Activated T-helper 1 cell treated with anti-CD3 and anti-CD28 coated beads, Interleukin-12 subunit alpha, Interleukin-12 subunit beta, Interleukin-2, Interleukin-4 antibody, amounts not matched to agents 30 ng/mL and 10 ng/mL and 1 ng/mL, durations not matched to agents 14 hours and 24 hours and 36 hours (primary cell): ENCODE measurements at regions of chr1 and their contacts with region 1.

Region 1: DNA sequence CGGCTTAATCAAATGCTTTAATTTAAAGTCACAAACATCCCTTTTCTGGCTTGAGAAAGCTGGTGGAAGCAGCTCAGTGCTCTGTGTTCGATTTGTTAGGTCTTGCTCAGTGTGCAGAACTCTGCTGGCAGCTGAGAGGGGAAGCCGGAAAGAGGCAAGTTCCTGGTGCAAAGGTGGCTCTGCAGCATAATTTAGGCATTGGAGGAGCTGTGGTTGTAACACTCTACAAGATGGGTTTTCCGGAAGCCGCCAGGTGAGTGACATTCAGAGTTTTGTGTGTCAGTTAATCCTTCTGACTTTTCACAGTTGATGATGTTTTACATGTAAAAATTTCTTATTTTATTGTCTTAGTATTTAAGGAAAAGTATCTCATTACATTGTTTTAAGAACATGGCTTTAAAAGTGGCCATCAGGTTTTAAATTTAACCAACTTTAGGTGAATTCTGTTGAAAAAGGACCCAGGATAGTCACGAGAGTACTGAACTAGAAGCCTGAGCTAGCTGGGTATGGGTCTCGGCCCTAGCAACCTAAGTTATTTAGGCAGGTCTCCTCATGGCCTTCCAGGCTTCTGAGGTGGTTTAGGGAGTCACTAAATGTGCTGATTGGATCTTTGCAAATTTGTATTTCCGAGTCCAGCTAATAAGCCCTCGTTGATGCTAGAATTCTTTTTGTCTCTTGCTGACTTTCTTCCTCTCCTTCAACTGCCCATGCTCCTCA is 47.1 kb upstream of the PODN start:
- DNase-seq: peak; percentile 78
- H3K4me3 Mint-ChIP-seq: peak overlapping the region; percentile 91
- H3K27ac Mint-ChIP-seq: peak overlapping the region; percentile 61
- H3K4me1 Mint-ChIP-seq: peaks cover 23% of the 10 kb centered on the region
- H3K27me3 Mint-ChIP-seq: no peaks in the 10 kb centered on the region

Region 2: GRCh38 chr1:52927212-52928014 is 87.5 kb before region 1 on chr1 and contains the start of gene SCP2:
- intact Hi-C with region 1: loop called (anchors 5 kb)
- DNase-seq: peak; percentile 74
- H3K4me3 Mint-ChIP-seq: peak within 1 kb of the TSS; percentile 90
- H3K27ac Mint-ChIP-seq: peak within 1 kb of the TSS; percentile 83
- H3K4me1 Mint-ChIP-seq: peaks cover 15% of the 10 kb centered on the region
- H3K27me3 Mint-ChIP-seq: peaks cover 8% of the 10 kb centered on the region
- total RNA-seq, gene SCP2: 54.7 and 58.3 TPM in 2 replicates